ENCODE measurements at regions of chr18 and their contacts with region 1.

Region 1: GRCh38 chr18:66616523-66616983 is 12.7 kb upstream of the CDH19 start:
- DNase-seq: peak in 4 of 10 donors; percentile 8 to 83 (median 24)

Region 2: GRCh38 chr18:66066191-66066590 is 550.4 kb before region 1 on chr18:
- intact Hi-C with region 1: no loop called
- DNase-seq: no peak

Region 3: GRCh38 chr18:66548747-66549146 is 67.8 kb before region 1 on chr18:
- intact Hi-C with region 1: loop called (anchors 2 kb)
- DNase-seq: no peak

Measured in posterior cingulate gyrus (tissue), 11 donors.